ENCODE measurements at regions of chr17 and their contacts with region 1.

Region 1: GRCh38 chr17:75749545-75750389 is 15.2 kb downstream of the GALK1 start:
- DNase-seq: no peak
- H3K4me3 ChIP-seq: 0 out of 2 replicates have a peak overlapping the region, but pooled peaks have one; percentile 10
- H3K27ac ChIP-seq: no peak overlapping the region
- H3K27me3 ChIP-seq: peaks cover 3% of the 10 kb centered on the region
- CTCF ChIP-seq: peak; percentile 87

Region 2: GRCh38 chr17:75356260-75356937 is 393.4 kb before region 1 on chr17:
- CTCF ChIA-PET with region 1: no interaction called
- POLR2A ChIA-PET with region 1: no interaction called
- DNase-seq: no peak
- H3K4me3 ChIP-seq: no peak overlapping the region
- H3K27ac ChIP-seq: no peak overlapping the region
- H3K27me3 ChIP-seq: no peaks in the 10 kb centered on the region
- CTCF ChIP-seq: no peak

Region 3: DNA sequence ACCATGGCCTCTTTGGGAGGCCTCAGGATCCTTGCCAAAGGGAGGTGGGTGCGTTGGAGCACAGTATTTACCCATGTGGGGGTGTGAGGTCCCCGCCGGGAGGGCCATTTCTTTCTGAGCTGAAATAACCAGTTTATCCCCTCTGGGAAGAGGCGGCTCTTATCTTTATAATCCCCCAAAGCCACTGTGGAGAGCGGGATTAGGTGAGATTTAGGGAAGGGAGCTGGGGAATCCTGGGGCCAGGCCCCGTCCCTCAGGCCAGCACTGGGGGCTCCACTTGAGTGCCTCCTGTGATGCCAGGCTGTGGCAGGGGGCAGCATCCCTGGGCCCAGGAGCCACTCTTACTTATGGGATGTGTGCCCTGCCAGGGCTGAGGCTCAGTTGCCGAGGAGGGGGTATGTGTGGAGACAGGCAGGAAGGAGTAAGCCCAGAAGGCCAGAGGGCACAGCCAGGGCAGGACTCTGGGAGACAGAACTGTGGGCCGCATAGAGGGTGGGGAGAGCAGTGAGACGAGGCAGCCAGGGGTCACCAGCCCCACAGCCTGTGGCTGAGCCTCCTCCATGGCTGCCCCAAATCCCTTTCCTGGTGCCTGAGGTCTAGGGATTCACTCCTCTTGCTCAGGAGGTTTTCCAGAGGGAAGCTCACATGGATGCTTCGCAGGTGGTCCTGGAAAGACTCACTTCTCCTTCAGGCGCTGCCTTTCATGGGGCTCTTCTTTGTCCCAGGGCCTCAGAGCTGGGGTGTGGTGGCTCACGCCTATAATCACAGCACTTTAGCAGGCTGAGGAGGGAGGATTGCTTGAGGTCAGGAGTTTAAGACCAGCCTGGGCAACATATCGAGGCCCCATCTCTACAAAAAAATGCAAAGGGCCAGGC is 268.3 kb before region 1 on chr17:
- CTCF ChIA-PET with region 1: interaction called, 13 read pairs
- POLR2A ChIA-PET with region 1: interaction called, 3 read pairs
- DNase-seq: no peak
- H3K4me3 ChIP-seq: no peak overlapping the region
- H3K27ac ChIP-seq: no peak overlapping the region
- H3K27me3 ChIP-seq: no peaks in the 10 kb centered on the region
- CTCF ChIP-seq: no peak

Region 4: GRCh38 chr17:75619506-75620431 is 130.0 kb before region 1 on chr17:
- CTCF ChIA-PET with region 1: interaction called, 14 read pairs
- POLR2A ChIA-PET with region 1: no interaction called
- DNase-seq: peak; percentile 11
- H3K4me3 ChIP-seq: no peak overlapping the region
- H3K27ac ChIP-seq: no peak overlapping the region
- H3K27me3 ChIP-seq: peaks cover 15% of the 10 kb centered on the region
- CTCF ChIP-seq: peak; percentile 63

Region 5: GRCh38 chr17:75652915-75653549 is 96.7 kb before region 1 on chr17:
- CTCF ChIA-PET with region 1: interaction called, 21 read pairs
- POLR2A ChIA-PET with region 1: no interaction called
- DNase-seq: no peak
- H3K4me3 ChIP-seq: no peak overlapping the region
- H3K27ac ChIP-seq: no peak overlapping the region
- H3K27me3 ChIP-seq: no peaks in the 10 kb centered on the region
- CTCF ChIP-seq: peak; percentile 88

Region 6: GRCh38 chr17:75679706-75680442 is 69.9 kb before region 1 on chr17:
- CTCF ChIA-PET with region 1: interaction called, 214 read pairs
- POLR2A ChIA-PET with region 1: interaction called, 3 read pairs
- DNase-seq: no peak
- H3K4me3 ChIP-seq: no peak overlapping the region
- H3K27ac ChIP-seq: peak overlapping the region; percentile 31
- H3K27me3 ChIP-seq: no peaks in the 10 kb centered on the region
- CTCF ChIP-seq: no peak

Region 7: DNA sequence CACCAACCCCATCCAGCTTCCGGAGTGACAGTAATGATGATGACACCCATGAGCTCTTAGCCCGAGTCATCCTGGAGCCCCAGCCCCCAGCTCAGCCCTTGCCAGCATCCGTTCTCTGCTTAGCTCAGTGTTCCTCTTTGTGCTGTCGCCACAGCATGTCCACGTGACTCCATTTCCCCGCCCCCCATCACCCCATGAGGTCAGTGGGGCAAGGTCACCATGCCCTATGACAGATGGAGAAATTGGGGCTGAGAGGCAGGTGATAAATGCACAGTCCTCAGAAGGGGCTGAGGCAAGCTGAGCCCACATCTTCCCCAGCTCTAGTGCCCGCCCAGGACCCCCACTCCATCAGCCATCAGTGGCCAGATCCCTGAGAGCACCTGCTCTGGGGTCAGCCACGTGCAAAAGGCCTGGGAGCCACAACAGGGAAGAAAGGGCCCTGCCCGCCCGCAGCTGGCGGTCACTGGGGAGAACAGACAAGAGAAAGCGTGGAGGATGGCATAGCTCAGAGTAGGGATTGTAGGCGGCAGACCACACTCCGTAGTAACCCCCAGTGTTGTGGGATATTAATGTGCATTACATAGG is 11.5 kb before region 1 on chr17:
- CTCF ChIA-PET with region 1: interaction called, 23 read pairs
- POLR2A ChIA-PET with region 1: no interaction called
- DNase-seq: no peak
- H3K4me3 ChIP-seq: no peak overlapping the region
- H3K27ac ChIP-seq: no peak overlapping the region
- H3K27me3 ChIP-seq: peaks cover 8% of the 10 kb centered on the region
- CTCF ChIP-seq: no peak